CD4-positive, alpha-beta memory T cell (primary cell): ENCODE measurements at regions of chr12 and their contacts with region 1.

Region 1: GRCh38 chr12:3885277-3886094 is 12.3 kb upstream of the PARP11 start:
- DNase-seq: peak; percentile 55 to 73 (median 70)
- H3K4me3 ChIP-seq: no peak overlapping the region
- H3K4me3 Mint-ChIP-seq: peak overlapping the region in 3 of 8 donors; percentile 19 to 25 (median 22)
- H3K27ac ChIP-seq: no peak overlapping the region
- H3K27ac Mint-ChIP-seq: peak overlapping the region; percentile 2 to 90 (median 53)
- H3K4me1 ChIP-seq: peaks cover 9% of the 10 kb centered on the region
- H3K4me1 Mint-ChIP-seq: peaks cover 12 to 25% (median 13%) of the 10 kb centered on the region in 4 donors
- H3K27me3 ChIP-seq: no peaks in the 10 kb centered on the region
- H3K27me3 Mint-ChIP-seq: peaks cover 5 to 7% of the 10 kb centered on the region in 2 donors

Region 2: DNA sequence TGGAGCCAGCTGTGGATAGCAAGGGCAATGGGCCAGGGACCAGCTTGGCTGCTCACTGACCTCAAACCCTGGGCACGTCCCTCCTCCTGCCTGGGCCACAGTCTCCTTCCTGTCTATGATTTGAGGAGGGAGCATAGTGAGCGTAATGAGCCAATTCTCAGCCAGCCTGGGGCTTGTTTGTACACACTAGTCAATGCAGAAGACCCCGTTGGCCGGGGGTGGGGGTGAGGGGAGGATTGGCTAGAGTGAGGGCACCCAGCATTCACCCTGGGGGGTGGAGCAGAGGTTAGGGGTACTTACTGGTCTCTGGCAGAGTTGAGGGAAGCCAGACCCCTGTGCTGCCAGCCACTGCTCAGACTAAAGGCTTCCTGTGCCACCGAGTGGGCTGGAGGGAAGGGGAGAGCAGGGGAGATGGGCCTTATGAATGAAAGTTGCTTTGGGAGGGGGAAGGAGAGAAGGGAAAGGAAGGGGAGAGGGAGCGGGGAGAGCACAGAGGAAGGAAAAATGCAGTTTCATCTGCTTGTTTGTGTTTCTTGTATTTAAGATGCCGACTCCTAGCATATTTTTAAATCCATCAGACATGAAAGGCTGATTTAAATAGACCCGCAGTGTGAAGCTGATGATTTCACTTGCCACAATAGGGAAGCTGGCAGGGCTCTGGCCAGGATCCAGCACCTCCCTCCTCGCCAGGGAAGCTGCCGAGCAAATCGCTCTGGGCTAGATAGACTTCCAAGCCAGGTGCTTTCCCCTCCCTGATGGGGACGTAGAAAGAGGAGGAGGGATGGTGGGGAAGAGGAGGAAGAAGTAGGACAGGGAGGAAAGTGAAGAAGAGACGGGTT is 280.5 kb before region 1 on chr12:
- CTCF ChIA-PET with region 1: no interaction called
- POLR2A ChIA-PET with region 1: no interaction called
- intact Hi-C with region 1: no loop called
- DNase-seq: no peak
- H3K4me3 ChIP-seq: no peak overlapping the region
- H3K4me3 Mint-ChIP-seq: no peak overlapping the region
- H3K27ac ChIP-seq: no peak overlapping the region
- H3K27ac Mint-ChIP-seq: peak overlapping the region in 2 of 7 donors; percentile 23 to 29
- H3K4me1 ChIP-seq: no peaks in the 10 kb centered on the region
- H3K4me1 Mint-ChIP-seq: peaks cover 0 to 4% (median 2%) of the 10 kb centered on the region in 4 donors
- H3K27me3 ChIP-seq: no peaks in the 10 kb centered on the region
- H3K27me3 Mint-ChIP-seq: no peaks in the 10 kb centered on the region

Region 3: DNA sequence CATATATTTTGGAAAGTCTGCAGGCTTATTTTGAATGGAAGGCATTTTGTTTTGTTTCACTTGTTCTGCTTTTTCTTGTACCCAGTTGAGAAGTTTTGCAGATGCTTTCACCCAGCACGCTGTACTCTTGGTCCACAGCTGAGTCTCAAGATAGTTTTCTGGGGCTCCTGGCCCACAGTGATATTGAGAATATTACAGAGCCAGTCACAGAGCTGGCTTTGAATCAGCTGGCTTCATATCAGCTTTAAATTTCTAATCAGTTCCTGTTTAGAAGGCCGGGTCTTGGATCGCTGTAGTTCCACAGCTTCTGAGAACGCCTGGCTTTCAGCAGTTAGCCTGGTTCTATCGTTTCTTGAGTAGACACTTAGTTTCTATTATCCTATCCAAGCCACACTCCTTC is 20.2 kb after region 1 on chr12:
- CTCF ChIA-PET with region 1: interaction called, 18 read pairs
- POLR2A ChIA-PET with region 1: interaction called, 51 read pairs
- intact Hi-C with region 1: no loop called
- DNase-seq: no peak
- H3K4me3 ChIP-seq: peak overlapping the region; percentile 34 to 36
- H3K4me3 Mint-ChIP-seq: peak overlapping the region; percentile 57 to 91 (median 86)
- H3K27ac ChIP-seq: peak overlapping the region; percentile 20
- H3K27ac Mint-ChIP-seq: peak overlapping the region; percentile 63 to 94 (median 83)
- H3K4me1 ChIP-seq: peaks cover 33% of the 10 kb centered on the region
- H3K4me1 Mint-ChIP-seq: peaks cover 23 to 45% (median 30%) of the 10 kb centered on the region in 4 donors
- H3K27me3 ChIP-seq: no peaks in the 10 kb centered on the region
- H3K27me3 Mint-ChIP-seq: no peaks in the 10 kb centered on the region

Region 4: DNA sequence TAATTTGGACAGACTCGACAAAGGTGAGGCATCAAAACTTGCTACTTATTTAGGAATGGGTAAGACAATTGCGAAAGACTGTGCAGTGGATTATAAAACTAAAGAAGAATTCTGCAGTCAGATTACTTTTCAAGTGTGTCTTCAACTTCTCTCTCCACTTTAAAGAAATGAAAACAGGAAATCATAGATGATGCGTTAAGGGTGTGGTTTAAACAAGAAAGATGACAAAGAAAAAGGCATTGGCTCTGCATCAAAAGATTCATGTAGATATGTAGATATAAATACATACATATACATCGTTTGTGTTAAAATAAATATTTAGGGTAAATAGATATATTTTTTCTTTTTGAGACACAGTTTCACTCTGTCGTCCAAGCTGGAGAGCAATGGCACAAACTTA is 62.3 kb after region 1 on chr12:
- CTCF ChIA-PET with region 1: interaction called, 19 read pairs
- POLR2A ChIA-PET with region 1: interaction called, 59 read pairs
- intact Hi-C with region 1: no loop called
- DNase-seq: peak in 4 of 5 donors; percentile 73 to 82 (median 78)
- H3K4me3 ChIP-seq: no peak overlapping the region
- H3K4me3 Mint-ChIP-seq: peak overlapping the region; percentile 31 to 84 (median 54)
- H3K27ac ChIP-seq: peak overlapping the region; percentile 57
- H3K27ac Mint-ChIP-seq: peak overlapping the region; percentile 89 to 99 (median 99)
- H3K4me1 ChIP-seq: peaks cover 65% of the 10 kb centered on the region
- H3K4me1 Mint-ChIP-seq: peaks cover 50 to 86% (median 63%) of the 10 kb centered on the region in 4 donors
- H3K27me3 ChIP-seq: no peaks in the 10 kb centered on the region
- H3K27me3 Mint-ChIP-seq: no peaks in the 10 kb centered on the region

Region 5: GRCh38 chr12:3988519-3989448 is 103.3 kb after region 1 on chr12:
- CTCF ChIA-PET with region 1: interaction called, 101 read pairs
- POLR2A ChIA-PET with region 1: interaction called, 48 read pairs
- intact Hi-C with region 1: no loop called
- DNase-seq: peak in 4 of 5 donors; percentile 40 to 50 (median 43)
- H3K4me3 ChIP-seq: peak overlapping the region in 1 of 2 donors; percentile 2
- H3K4me3 Mint-ChIP-seq: peak overlapping the region in 7 of 8 donors; percentile 45 to 88 (median 66)
- H3K27ac ChIP-seq: peak overlapping the region; percentile 6
- H3K27ac Mint-ChIP-seq: peak overlapping the region; percentile 56 to 94 (median 90)
- H3K4me1 ChIP-seq: peaks cover 24% of the 10 kb centered on the region
- H3K4me1 Mint-ChIP-seq: peaks cover 18 to 33% (median 25%) of the 10 kb centered on the region in 4 donors
- H3K27me3 ChIP-seq: no peaks in the 10 kb centered on the region
- H3K27me3 Mint-ChIP-seq: peaks cover 0 to 2% of the 10 kb centered on the region in 2 donors

Region 6: GRCh38 chr12:4030929-4031702 is 145.6 kb after region 1 on chr12:
- CTCF ChIA-PET with region 1: interaction called, 146 read pairs
- POLR2A ChIA-PET with region 1: interaction called, 4 read pairs
- intact Hi-C with region 1: no loop called
- DNase-seq: peak; percentile 67 to 76 (median 70)
- H3K4me3 ChIP-seq: peak overlapping the region in 1 of 2 donors; percentile 52
- H3K4me3 Mint-ChIP-seq: peak overlapping the region; percentile 75 to 87 (median 78)
- H3K27ac ChIP-seq: no peak overlapping the region
- H3K27ac Mint-ChIP-seq: peak overlapping the region; percentile 45 to 90 (median 82)
- H3K4me1 ChIP-seq: peaks cover 34% of the 10 kb centered on the region
- H3K4me1 Mint-ChIP-seq: peaks cover 27 to 45% (median 35%) of the 10 kb centered on the region in 4 donors
- H3K27me3 ChIP-seq: no peaks in the 10 kb centered on the region
- H3K27me3 Mint-ChIP-seq: no peaks in the 10 kb centered on the region